ENCODE measurements at regions of chr7 and their contacts with region 1.

Region 1: GRCh38 chr7:92904292-92905131 is 68.1 kb upstream of the CDK6 start:
- DNase-seq: peak; percentile 95
- H3K4me3 Mint-ChIP-seq: peak overlapping the region; percentile 29
- H3K27ac Mint-ChIP-seq: peak overlapping the region; percentile 88
- H3K4me1 Mint-ChIP-seq: peaks cover 31% of the 10 kb centered on the region
- H3K27me3 Mint-ChIP-seq: no peaks in the 10 kb centered on the region

Region 2: GRCh38 chr7:92682903-92683539 is 221.5 kb before region 1 on chr7:
- CTCF ChIA-PET with region 1: no interaction called
- POLR2A ChIA-PET with region 1: no interaction called
- intact Hi-C with region 1: loop called (anchors 1 kb)
- DNase-seq: peak; percentile 20
- H3K4me3 Mint-ChIP-seq: no peak overlapping the region
- H3K27ac Mint-ChIP-seq: peak overlapping the region; percentile 87
- H3K4me1 Mint-ChIP-seq: peaks cover 85% of the 10 kb centered on the region
- H3K27me3 Mint-ChIP-seq: no peaks in the 10 kb centered on the region

Region 3: DNA sequence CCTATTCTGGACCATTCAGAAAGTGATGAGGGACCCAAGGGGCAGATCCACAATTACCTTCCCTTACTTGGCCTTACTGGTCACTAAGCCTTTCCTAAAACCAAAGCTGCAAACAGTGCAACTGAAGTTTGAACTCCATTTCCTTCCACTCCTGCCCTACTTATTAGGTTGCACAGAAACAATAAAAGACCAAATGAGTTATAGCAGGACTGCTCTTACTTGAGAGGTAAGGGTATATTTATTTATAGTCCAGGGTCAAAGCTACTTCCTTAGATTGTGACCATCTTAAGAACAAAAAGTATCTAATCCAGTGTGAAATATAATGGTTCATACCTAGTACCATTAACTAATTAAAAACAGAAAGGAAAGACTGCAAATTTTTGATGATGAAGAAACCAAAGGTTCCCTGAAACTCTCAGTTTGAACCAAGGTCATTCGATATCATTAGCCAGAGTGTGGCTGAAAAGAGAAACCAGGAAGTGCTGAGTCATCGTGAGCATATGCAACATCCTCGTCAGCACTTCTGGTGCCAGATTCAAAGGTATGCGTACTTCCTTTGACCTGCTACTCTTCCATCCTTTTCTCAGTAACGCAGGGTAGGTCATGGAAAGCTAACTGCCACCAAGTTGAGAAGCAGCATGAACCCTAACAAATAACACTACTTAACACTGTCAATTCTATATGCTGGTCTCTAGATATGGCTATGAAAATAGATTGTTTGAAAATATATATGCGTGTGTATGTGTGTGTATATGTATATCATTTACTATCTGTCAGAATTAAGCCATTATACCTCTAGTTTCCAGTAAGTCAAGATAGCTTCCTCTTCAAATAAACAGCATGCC is 94.9 kb before region 1 on chr7:
- CTCF ChIA-PET with region 1: interaction called, 6 read pairs
- POLR2A ChIA-PET with region 1: interaction called, 5 read pairs
- intact Hi-C with region 1: loop called (anchors 1 kb)
- DNase-seq: peak; percentile 83
- H3K4me3 Mint-ChIP-seq: peak overlapping the region; percentile 39
- H3K27ac Mint-ChIP-seq: peak overlapping the region; percentile 89
- H3K4me1 Mint-ChIP-seq: peaks cover 73% of the 10 kb centered on the region
- H3K27me3 Mint-ChIP-seq: no peaks in the 10 kb centered on the region

Region 4: DNA sequence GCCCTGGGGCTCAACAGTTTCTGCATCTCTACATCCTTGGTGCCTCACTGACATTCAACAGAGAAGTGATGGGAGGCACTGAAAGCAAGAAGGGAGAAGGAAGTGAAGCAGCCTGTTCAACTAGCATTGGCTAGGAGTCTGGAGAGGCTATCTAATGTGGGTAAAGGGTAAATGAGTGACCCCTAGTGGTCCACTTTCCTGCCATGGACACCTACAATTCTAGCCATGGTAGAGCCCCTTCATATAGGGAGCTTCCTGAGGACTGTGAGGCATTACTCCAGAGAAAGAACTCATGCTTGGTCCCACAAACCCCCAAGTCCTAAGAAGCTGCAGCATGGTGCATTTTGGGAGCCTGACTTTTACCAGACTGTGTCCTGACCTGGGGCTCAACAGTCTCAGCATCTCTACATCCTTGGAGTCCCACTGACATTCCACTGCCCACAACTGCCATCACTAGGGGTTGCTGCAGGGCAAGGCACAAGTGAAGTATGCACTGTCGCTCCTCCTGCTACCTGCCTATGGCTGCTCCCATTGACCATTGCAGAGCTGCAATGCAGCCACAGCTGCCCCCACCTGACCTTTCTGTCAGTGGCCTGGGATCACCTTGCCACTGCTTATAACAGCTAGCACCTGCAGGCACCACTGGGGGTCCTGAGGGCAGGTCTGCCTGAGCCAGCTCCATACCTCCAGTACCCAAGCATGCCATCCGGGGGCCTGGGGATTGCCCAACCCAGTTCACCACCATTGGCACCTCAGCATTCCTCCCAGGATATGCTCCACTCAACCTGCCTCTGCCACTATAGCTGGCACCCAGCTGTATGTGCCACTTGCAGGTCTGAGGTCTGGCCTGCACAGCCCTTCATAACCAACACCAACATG is 24.1 kb before region 1 on chr7:
- CTCF ChIA-PET with region 1: no interaction called
- POLR2A ChIA-PET with region 1: no interaction called
- intact Hi-C with region 1: loop called (anchors 1 kb)
- DNase-seq: peak; percentile 44
- H3K4me3 Mint-ChIP-seq: no peak overlapping the region
- H3K27ac Mint-ChIP-seq: no peak overlapping the region
- H3K4me1 Mint-ChIP-seq: peaks cover 36% of the 10 kb centered on the region
- H3K27me3 Mint-ChIP-seq: no peaks in the 10 kb centered on the region

Region 5: GRCh38 chr7:93055543-93056107 is 151.1 kb after region 1 on chr7:
- CTCF ChIA-PET with region 1: no interaction called
- POLR2A ChIA-PET with region 1: no interaction called
- intact Hi-C with region 1: loop called (anchors 5 kb)
- DNase-seq: no peak
- H3K4me3 Mint-ChIP-seq: no peak overlapping the region
- H3K27ac Mint-ChIP-seq: no peak overlapping the region
- H3K4me1 Mint-ChIP-seq: peaks cover 17% of the 10 kb centered on the region
- H3K27me3 Mint-ChIP-seq: peaks cover 6% of the 10 kb centered on the region

Measured in activated CD4-positive, alpha-beta memory T cell treated with anti-CD3 and anti-CD28 coated beads for 36 hours (primary cell).